Activated CD8-positive, alpha-beta memory T cell treated with anti-CD3 and anti-CD28 coated beads, Interleukin-2, amount 10 ng/mL, durations not matched to agents 7 days and 5 days (primary cell): ENCODE measurements at regions of chr9 and their contacts with region 1.

Region 1: DNA sequence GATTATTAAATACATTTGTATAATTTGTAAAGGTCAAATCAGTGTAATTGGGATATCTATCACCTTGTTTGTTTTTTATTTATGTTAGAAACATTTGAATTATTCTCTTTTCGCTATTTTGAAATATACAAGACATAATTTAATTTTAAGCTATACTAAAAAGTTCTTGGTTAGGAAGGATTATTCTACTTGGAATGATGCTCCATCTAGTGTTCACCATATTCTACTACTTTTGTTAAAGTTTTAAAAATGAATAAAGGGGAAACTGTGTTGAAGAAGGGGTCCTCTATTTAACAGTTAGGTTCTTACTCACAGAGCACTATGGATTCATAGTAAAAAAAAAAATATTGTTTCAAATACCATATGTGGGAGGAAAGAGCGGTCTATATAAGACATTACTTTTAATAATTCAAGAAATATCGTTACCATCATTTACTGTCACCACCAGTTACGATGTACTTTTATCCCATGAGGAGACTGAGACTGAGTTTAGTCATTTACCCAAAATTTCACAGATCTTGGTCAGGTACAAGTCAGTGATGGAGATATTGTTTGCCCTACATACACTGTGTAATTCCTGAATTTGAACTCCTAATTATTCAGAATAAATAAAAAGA is 6.3 kb upstream of the STOM start:
- DNase-seq: no peak
- ATAC-seq: no peak
- H3K4me3 Mint-ChIP-seq: no peak overlapping the region
- H3K27ac Mint-ChIP-seq: no peak overlapping the region
- H3K4me1 Mint-ChIP-seq: peaks cover 21% of the 10 kb centered on the region
- H3K27me3 Mint-ChIP-seq: peaks cover 3% of the 10 kb centered on the region

Region 2: DNA sequence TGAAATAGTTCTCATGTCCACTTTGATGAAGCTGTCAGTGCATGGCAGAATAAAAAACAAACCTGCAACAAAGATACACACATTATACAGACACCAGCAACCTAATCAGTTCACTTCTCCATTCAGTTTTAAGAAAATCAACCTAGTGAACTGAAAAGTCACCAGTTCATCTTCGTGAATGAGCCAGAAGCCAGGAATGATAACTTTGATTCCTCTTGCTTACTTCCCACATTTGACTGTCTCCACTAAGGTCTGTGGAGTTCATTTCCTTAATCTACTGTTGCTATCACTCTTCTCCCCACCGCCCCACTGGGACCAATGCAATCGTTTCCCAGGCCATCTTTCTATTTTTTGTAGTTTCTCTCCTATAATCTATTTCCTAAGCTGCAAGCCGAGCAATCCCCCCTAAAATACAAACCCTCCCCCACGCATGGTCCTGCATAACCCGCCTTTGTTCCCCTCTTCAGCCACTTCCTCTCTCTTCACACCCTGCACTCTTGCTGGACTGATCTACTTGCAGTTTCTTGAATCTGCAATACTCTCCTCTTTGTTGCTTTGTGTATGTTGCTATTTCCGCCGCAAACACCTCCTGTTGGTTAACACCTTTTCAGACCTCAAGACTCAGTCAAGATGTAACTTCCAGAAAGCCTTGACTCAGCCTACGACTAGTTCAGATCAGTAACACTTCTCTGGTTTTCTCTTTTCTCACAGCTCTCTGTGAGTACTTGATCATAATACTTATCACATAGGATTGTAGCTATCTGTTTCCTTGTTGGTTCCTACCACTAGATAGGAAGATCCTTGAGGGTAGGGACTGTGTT is 22.9 kb before region 1 on chr9:
- CTCF ChIA-PET with region 1: interaction called, 10 read pairs
- DNase-seq: peak; percentile 92
- ATAC-seq: peak; percentile 90
- H3K4me3 Mint-ChIP-seq: peak overlapping the region; percentile 54
- H3K27ac Mint-ChIP-seq: peak overlapping the region; percentile 96
- H3K4me1 Mint-ChIP-seq: peaks cover 70% of the 10 kb centered on the region
- H3K27me3 Mint-ChIP-seq: no peaks in the 10 kb centered on the region